ENCODE measurements at regions of chr4 and their contacts with region 1.

Region 1: GRCh38 chr4:6673660-6674499 is 19.8 kb upstream of the S100P start:
- DNase-seq: peak; percentile 98 to 99 (median 99)
- H3K4me3 ChIP-seq: peak overlapping the region; percentile 61 to 82 (median 77)
- H3K27ac ChIP-seq: peak overlapping the region; percentile 25 to 71
- H3K4me1 ChIP-seq: peaks cover 14 to 38% (median 33%) of the 10 kb centered on the region in 4 experiments
- H3K27me3 ChIP-seq: no peaks in the 10 kb centered on the region

Region 2: DNA sequence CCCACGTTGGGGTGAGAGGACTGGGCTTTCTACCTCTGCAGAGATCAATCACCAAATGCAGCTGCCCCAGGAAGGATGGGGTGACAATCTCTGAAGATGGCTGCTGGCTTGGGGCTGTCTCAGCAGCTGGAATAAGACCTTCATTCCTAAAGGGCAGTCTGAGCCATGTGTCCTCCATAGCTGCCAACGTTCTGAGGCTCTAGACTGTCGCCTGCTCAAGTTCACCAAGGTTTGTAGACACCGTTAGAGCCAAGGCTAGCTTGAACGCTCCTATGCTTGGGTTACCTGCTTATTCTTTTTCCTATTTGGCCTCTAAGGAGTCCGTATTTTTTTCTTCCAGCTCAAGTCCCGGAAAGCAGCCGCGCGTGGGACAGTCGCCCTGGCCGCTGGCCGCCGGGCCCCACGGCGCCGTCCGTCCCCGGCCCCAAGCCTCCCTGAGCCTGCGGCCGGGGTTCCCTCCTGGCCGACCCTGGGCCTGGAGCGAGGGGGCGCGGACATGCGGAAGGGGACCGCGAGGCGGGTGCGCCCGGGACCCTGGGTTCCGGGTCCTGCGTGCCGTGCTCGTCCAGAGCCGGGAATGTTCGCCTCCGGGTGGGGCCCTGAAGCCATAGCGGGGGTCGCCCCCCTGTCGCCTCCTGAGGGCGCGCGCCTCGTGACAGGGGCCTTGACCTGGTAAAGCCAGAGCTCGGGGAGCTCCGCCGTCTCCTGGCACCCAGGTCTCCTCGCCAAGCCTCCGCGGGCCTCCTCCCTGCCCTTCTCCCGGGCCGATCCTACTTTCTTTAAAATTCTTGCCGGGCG is 10.1 kb before region 1 on chr4:
- CTCF ChIA-PET with region 1: interaction called, 24 read pairs
- POLR2A ChIA-PET with region 1: no interaction called
- DNase-seq: no peak
- H3K4me3 ChIP-seq: peak overlapping the region in 3 of 7 experiments; percentile 11 to 34 (median 24)
- H3K27ac ChIP-seq: no peak overlapping the region
- H3K4me1 ChIP-seq: peaks cover 3 to 11% (median 7%) of the 10 kb centered on the region in 4 experiments
- H3K27me3 ChIP-seq: peaks cover 18 to 74% (median 42%) of the 10 kb centered on the region in 5 experiments

Region 3: GRCh38 chr4:6688879-6689505 is 15.1 kb after region 1 on chr4:
- CTCF ChIA-PET with region 1: interaction called, 14 read pairs
- POLR2A ChIA-PET with region 1: interaction called, 8 read pairs
- DNase-seq: peak; percentile 69 to 94 (median 91)
- H3K4me3 ChIP-seq: peak overlapping the region in 2 of 7 experiments; percentile 0 to 28
- H3K27ac ChIP-seq: peak overlapping the region in 1 of 2 experiments; percentile 57
- H3K4me1 ChIP-seq: peaks cover 0 to 55% (median 26%) of the 10 kb centered on the region in 4 experiments
- H3K27me3 ChIP-seq: no peaks in the 10 kb centered on the region

Region 4: DNA sequence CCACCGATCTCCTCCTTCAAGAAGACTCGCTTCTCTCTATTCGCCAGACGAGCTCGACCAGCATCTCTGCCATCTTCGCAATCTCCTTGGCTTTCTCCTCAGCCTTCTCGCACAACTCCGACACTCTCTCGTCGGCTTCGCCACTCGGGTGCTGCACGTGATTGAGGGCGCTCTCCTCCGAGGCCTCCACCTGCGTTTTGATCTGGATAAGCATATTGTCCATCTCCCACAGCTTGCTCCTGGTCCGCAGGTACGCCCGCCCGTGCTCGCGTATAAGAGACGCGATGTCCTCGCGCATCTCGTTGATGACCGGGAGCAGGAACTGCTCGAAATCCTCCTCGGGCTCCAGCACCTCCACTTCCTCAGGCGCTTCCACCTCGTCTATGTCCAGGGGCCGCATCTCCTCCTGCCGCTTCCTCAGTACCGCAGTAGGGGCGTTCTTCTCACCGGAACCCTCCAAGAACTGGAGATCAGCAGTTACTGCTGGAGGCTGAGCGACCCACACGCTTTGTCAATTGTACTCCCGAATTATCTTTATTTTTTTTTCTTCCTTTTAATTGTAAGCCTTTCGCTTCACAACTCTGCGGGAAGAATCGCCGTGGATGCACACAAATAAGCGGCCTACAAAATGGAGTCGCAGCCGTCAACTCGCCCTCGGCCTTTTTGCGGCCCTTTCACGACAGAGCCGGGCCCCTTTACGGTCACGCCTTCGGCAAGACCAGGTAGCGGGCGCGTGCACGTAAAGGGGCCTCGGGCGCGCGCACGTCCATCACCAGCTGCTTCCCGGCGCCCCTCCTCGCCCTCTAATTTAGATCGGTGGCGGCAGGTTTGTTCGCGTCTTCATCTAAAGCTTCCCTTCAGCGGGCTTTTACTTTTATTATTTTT is 35.6 kb after region 1 on chr4 and contains the start of gene MRFAP1L1:
- CTCF ChIA-PET with region 1: interaction called, 22 read pairs
- POLR2A ChIA-PET with region 1: interaction called, 3 read pairs
- DNase-seq: peak; percentile 99
- H3K4me3 ChIP-seq: peak within 1 kb of the TSS; percentile 78 to 93 (median 85)
- H3K27ac ChIP-seq: peak within 1 kb of the TSS; percentile 83 to 90
- H3K4me1 ChIP-seq: peaks cover 11 to 37% (median 27%) of the 10 kb centered on the region in 4 experiments
- H3K27me3 ChIP-seq: peaks cover 0 to 2% (median 0%) of the 10 kb centered on the region in 5 experiments

Region 5: GRCh38 chr4:6716018-6716911 is 42.4 kb after region 1 on chr4 and contains the start of gene BLOC1S4:
- CTCF ChIA-PET with region 1: interaction called, 22 read pairs
- POLR2A ChIA-PET with region 1: interaction called, 3 read pairs
- DNase-seq: peak; percentile 93 to 96 (median 95)
- H3K4me3 ChIP-seq: peak within 1 kb of the TSS; percentile 50 to 88 (median 73)
- H3K27ac ChIP-seq: peak within 1 kb of the TSS in 1 of 2 experiments; percentile 75
- H3K4me1 ChIP-seq: peaks cover 13 to 25% (median 18%) of the 10 kb centered on the region in 4 experiments
- H3K27me3 ChIP-seq: peaks cover 0 to 2% (median 0%) of the 10 kb centered on the region in 5 experiments

Region 6: DNA sequence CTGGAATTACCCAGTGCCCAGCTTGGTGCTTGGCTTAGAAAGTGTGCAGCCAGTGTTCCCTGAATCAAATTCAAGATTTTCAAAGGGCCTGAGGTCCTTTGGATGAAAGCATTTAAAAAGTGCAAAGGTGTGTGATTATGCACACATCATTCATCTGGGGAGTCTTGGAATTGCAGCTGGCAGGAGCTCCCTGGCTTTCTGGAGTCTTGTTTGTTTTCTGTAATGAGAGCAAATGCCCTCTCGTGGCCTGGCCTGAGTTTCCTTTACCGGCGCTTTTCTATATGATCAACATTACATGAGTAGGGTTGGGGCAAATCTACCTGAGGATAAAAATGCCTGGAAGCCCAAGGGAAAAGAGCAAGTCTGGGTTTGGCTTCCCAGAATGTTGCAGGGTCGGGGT is 493.8 kb after region 1 on chr4:
- CTCF ChIA-PET with region 1: no interaction called
- POLR2A ChIA-PET with region 1: no interaction called
- DNase-seq: no peak
- H3K4me3 ChIP-seq: no peak overlapping the region
- H3K27ac ChIP-seq: no peak overlapping the region
- H3K4me1 ChIP-seq: peaks cover 0 to 4% (median 0%) of the 10 kb centered on the region in 4 experiments
- H3K27me3 ChIP-seq: peaks cover 0 to 22% (median 2%) of the 10 kb centered on the region in 5 experiments

Measured in common myeloid progenitor, CD34-positive (primary cell).